Heart left ventricle (tissue), 16 donors: ENCODE measurements at regions of chr2 and their contacts with region 1.

Region 1: GRCh38 chr2:106582148-106583143 is 95.3 kb downstream of the CD8B2 start:
- DNase-seq: peak; percentile 67 to 77 (median 70)
- ATAC-seq: peak; percentile 70 to 86 (median 80)
- H3K4me3 ChIP-seq: peak overlapping the region in 11 of 12 donors; percentile 11 to 49 (median 37)
- H3K27ac ChIP-seq: no peak overlapping the region
- H3K4me1 ChIP-seq: peaks cover 0 to 11% (median 6%) of the 10 kb centered on the region in 12 donors
- H3K27me3 ChIP-seq: peaks cover 2 to 32% (median 13%) of the 10 kb centered on the region in 9 donors
- CTCF ChIP-seq: peak; percentile 65 to 91 (median 84)
- POLR2A ChIP-seq: no peak

Region 2: GRCh38 chr2:106537047-106537446 is 45.4 kb before region 1 on chr2:
- intact Hi-C with region 1: no loop called
- DNase-seq: peak in 2 of 5 donors; percentile 13 to 28
- ATAC-seq: peak; percentile 49 to 79 (median 68)
- H3K4me3 ChIP-seq: no peak overlapping the region
- H3K27ac ChIP-seq: peak overlapping the region in 2 of 12 donors; percentile 9 to 84
- H3K4me1 ChIP-seq: peaks cover 0 to 18% (median 0%) of the 10 kb centered on the region in 12 donors
- H3K27me3 ChIP-seq: peaks cover 0 to 18% (median 0%) of the 10 kb centered on the region in 9 donors
- CTCF ChIP-seq: no peak
- POLR2A ChIP-seq: no peak

Region 3: DNA sequence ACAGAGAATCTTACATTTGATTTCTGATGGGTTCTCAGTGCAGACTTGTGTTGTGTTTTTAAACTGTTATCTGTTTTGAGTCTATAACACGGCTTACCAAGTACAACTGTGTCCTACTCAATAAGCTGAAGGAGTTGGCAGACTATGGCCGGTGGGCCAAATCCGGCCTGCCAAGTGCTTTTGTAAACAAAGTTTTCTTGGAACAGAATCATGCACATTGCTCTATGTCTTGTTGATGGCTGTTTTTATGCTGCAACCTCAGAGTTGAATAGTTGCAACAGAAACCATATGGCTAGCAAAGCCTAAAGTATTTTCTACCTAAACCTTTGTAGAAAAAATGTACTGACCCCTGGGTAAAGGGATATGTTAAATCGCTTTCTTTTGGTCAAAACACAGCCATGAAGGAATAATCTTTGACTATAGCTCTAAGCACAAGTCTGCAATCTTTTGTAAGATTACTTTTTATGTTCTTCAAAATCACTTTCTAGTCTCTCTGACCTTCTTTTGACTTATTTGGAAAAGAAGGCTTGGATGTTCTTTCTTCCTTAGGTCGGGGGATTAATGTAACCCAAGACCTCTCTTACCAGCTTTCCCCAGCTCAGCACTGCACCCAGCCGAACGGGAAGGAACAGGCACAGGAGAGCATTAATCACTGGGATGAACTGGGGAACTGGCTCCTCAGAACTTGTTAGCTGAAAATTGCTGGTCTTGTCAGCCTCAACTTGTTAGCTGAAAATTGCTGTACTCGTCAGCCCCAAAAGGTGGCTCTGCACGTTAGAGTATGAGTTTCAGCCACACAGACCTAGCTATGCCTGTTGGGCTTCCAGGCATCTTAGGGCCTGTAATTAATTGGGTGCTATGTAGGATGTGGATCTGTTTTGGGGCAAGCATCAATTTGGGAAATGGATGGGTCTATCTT is 19.9 kb before region 1 on chr2:
- intact Hi-C with region 1: loop called in 2 of 10 experiments (anchors 1 to 2 kb)
- DNase-seq: no peak
- ATAC-seq: peak in 2 of 4 donors; percentile 11 to 16
- H3K4me3 ChIP-seq: no peak overlapping the region
- H3K27ac ChIP-seq: peak overlapping the region in 3 of 12 donors; percentile 3 to 67 (median 40)
- H3K4me1 ChIP-seq: peaks cover 0 to 30% (median 6%) of the 10 kb centered on the region in 12 donors
- H3K27me3 ChIP-seq: no peaks in the 10 kb centered on the region
- CTCF ChIP-seq: peak in 2 of 12 donors; percentile 8 to 19
- POLR2A ChIP-seq: no peak